ENCODE measurements at regions of chr11 and their contacts with region 1.

Region 1: GRCh38 chr11:106012744-106013143 is 9.3 kb downstream of the MSANTD4 start:
- DNase-seq: no peak
- CTCF ChIP-seq: no peak

Region 2: GRCh38 chr11:105862736-105863367 is 149.9 kb before region 1 on chr11:
- CTCF ChIA-PET with region 1: no interaction called
- POLR2A ChIA-PET with region 1: no interaction called
- DNase-seq: peak; percentile 7
- CTCF ChIP-seq: peak; percentile 48

Region 3: DNA sequence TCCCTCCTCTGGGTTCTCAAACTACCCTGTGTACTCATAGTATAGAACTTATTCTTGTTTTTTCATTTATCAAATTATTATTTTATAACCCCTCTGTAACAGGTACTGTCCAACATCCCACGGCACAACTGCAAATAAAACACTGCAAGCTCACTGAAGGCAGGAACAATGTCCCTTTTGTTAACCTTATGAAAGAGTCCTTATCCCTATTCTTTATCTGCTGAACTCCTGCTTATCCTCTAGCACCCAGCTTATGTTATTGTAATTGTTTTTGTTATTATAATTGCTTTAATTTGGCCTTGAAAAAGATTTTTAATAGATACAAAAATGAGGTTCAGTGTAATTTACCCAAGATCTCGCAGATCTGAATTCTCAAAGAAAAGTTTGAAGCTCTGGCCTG is 121.1 kb before region 1 on chr11:
- CTCF ChIA-PET with region 1: no interaction called
- POLR2A ChIA-PET with region 1: no interaction called
- DNase-seq: no peak
- CTCF ChIP-seq: no peak

Region 4: GRCh38 chr11:105991888-105992287 is 20.9 kb before region 1 on chr11:
- CTCF ChIA-PET with region 1: interaction called, 11 read pairs
- POLR2A ChIA-PET with region 1: no interaction called
- DNase-seq: no peak
- CTCF ChIP-seq: no peak

Measured in GM10248 (cell line).